Naive thymus-derived CD4-positive, alpha-beta T cell (primary cell): ENCODE measurements at regions of chr1 and their contacts with region 1.

Region 1: GRCh38 chr1:63651161-63651701 is 58.0 kb downstream of the PGM1 start:
- DNase-seq: peak in 8 of 9 donors; percentile 31 to 74 (median 60)
- ATAC-seq: peak; percentile 93
- H3K4me3 ChIP-seq: peak overlapping the region; percentile 1
- H3K4me3 Mint-ChIP-seq: peak overlapping the region; percentile 59 to 86 (median 74)
- H3K27ac ChIP-seq: peak overlapping the region; percentile 30
- H3K27ac Mint-ChIP-seq: peak overlapping the region; percentile 78 to 97 (median 94)
- H3K4me1 ChIP-seq: peaks cover 20 to 27% of the 10 kb centered on the region in 2 donors
- H3K4me1 Mint-ChIP-seq: peaks cover 18 to 50% (median 35%) of the 10 kb centered on the region in 7 donors
- H3K27me3 ChIP-seq: no peaks in the 10 kb centered on the region
- H3K27me3 Mint-ChIP-seq: no peaks in the 10 kb centered on the region

Region 2: GRCh38 chr1:63593303-63593885 is 57.8 kb before region 1 on chr1 and contains the start of gene PGM1:
- CTCF ChIA-PET with region 1: no interaction called
- POLR2A ChIA-PET with region 1: interaction called, 5 read pairs
- intact Hi-C with region 1: loop called (anchors 1 kb)
- DNase-seq: peak; percentile 63 to 81 (median 76)
- ATAC-seq: peak; percentile 91
- H3K4me3 ChIP-seq: peak within 1 kb of the TSS; percentile 71
- H3K4me3 Mint-ChIP-seq: peak within 1 kb of the TSS; percentile 96 to 99 (median 98)
- H3K27ac ChIP-seq: peak within 1 kb of the TSS; percentile 90
- H3K27ac Mint-ChIP-seq: peak within 1 kb of the TSS; percentile 95 to 99 (median 99)
- H3K4me1 ChIP-seq: peaks cover 0 to 7% of the 10 kb centered on the region in 2 donors
- H3K4me1 Mint-ChIP-seq: peaks cover 21 to 49% (median 40%) of the 10 kb centered on the region in 7 donors
- H3K27me3 ChIP-seq: no peaks in the 10 kb centered on the region
- H3K27me3 Mint-ChIP-seq: no peaks in the 10 kb centered on the region
- total RNA-seq, gene PGM1: 11.9 to 57.2 (median 16.1) TPM

Region 3: DNA sequence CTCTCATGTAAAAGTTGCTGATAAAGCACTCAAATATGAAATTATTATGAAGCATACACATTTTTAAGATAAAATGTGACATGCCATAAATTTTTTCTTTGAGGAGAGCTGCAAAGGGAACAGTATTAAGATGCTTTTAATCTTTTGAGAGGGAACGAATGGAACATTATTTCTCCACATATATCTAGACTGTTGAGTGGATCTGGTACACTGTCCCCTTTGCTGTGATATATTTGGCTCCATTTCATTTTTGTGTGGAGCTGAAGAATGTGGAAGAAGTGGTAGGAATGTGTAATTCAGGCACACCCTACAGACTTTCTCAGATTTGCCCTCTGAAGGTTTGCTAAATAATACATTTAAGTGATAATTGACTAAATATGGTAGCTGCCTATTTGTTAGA is 26.3 kb before region 1 on chr1:
- CTCF ChIA-PET with region 1: no interaction called
- POLR2A ChIA-PET with region 1: no interaction called
- intact Hi-C with region 1: no loop called
- DNase-seq: no peak
- ATAC-seq: no peak
- H3K4me3 ChIP-seq: no peak overlapping the region
- H3K4me3 Mint-ChIP-seq: no peak overlapping the region
- H3K27ac ChIP-seq: no peak overlapping the region
- H3K27ac Mint-ChIP-seq: no peak overlapping the region
- H3K4me1 ChIP-seq: no peaks in the 10 kb centered on the region
- H3K4me1 Mint-ChIP-seq: peaks cover 7 to 24% (median 18%) of the 10 kb centered on the region in 7 donors
- H3K27me3 ChIP-seq: no peaks in the 10 kb centered on the region
- H3K27me3 Mint-ChIP-seq: no peaks in the 10 kb centered on the region

Region 4: GRCh38 chr1:63635681-63636080 is 15.6 kb before region 1 on chr1:
- CTCF ChIA-PET with region 1: no interaction called
- POLR2A ChIA-PET with region 1: interaction called, 3 read pairs
- intact Hi-C with region 1: loop called in 1 of 2 experiments (anchors 2 kb)
- DNase-seq: no peak
- ATAC-seq: no peak
- H3K4me3 ChIP-seq: no peak overlapping the region
- H3K4me3 Mint-ChIP-seq: no peak overlapping the region
- H3K27ac ChIP-seq: no peak overlapping the region
- H3K27ac Mint-ChIP-seq: no peak overlapping the region
- H3K4me1 ChIP-seq: no peaks in the 10 kb centered on the region
- H3K4me1 Mint-ChIP-seq: peaks cover 0 to 24% (median 7%) of the 10 kb centered on the region in 7 donors
- H3K27me3 ChIP-seq: no peaks in the 10 kb centered on the region
- H3K27me3 Mint-ChIP-seq: no peaks in the 10 kb centered on the region

Region 5: GRCh38 chr1:64136752-64137411 is 485.7 kb after region 1 on chr1:
- CTCF ChIA-PET with region 1: no interaction called
- POLR2A ChIA-PET with region 1: no interaction called
- intact Hi-C with region 1: loop called in 1 of 2 experiments (anchors 1 kb)
- DNase-seq: peak; percentile 37 to 72 (median 58)
- ATAC-seq: peak; percentile 83
- H3K4me3 ChIP-seq: no peak overlapping the region
- H3K4me3 Mint-ChIP-seq: no peak overlapping the region
- H3K27ac ChIP-seq: no peak overlapping the region
- H3K27ac Mint-ChIP-seq: no peak overlapping the region
- H3K4me1 ChIP-seq: no peaks in the 10 kb centered on the region
- H3K4me1 Mint-ChIP-seq: no peaks in the 10 kb centered on the region
- H3K27me3 ChIP-seq: no peaks in the 10 kb centered on the region
- H3K27me3 Mint-ChIP-seq: peaks cover 0 to 12% (median 0%) of the 10 kb centered on the region in 5 donors

Region 6: DNA sequence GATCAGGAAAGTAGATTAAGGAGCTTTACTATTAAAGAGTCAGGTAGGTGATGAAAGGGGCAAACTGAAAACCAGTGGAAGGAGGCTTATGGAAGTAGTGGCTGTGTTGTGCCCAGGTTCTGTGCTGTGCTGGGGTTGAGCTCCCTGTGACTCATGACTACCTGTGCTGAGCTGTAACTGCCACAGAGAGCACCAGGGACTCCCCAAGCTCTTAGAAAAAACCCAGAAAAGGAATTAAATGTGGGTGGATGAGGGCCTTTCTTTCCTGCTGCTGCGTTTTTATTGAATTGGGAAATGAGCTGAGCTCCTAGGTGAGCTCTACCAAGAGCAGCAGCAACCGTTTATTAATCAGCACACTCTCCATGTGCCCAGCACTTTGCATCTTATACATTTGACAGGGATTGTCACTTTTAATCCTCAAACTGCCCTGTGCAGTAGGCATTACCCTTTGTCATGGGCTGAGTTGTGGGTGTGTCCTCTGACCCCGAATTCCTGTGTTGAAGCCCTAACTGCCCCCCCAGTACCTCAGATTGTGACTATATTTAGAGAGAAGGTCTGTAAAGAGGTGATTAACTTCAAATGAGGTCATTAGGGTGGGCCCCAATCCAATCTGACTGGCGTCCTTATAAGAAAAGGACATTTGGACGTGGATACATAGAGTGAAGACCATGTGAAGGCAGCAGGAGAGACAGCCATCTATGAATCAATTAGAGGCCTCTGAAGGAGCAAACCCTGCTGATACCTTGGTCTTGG is 1562.2 kb after region 1 on chr1:
- CTCF ChIA-PET with region 1: no interaction called
- POLR2A ChIA-PET with region 1: no interaction called
- intact Hi-C with region 1: no loop called
- DNase-seq: peak in 1 of 9 donors; percentile 33
- ATAC-seq: no peak
- H3K4me3 ChIP-seq: no peak overlapping the region
- H3K4me3 Mint-ChIP-seq: peak overlapping the region in 1 of 10 donors; percentile 11
- H3K27ac ChIP-seq: no peak overlapping the region
- H3K27ac Mint-ChIP-seq: peak overlapping the region in 1 of 9 donors; percentile 72
- H3K4me1 ChIP-seq: no peaks in the 10 kb centered on the region
- H3K4me1 Mint-ChIP-seq: peaks cover 4 to 48% (median 15%) of the 10 kb centered on the region in 7 donors
- H3K27me3 ChIP-seq: no peaks in the 10 kb centered on the region
- H3K27me3 Mint-ChIP-seq: peaks cover 0 to 8% (median 0%) of the 10 kb centered on the region in 5 donors